Activated CD8-positive, alpha-beta T cell treated with anti-CD3 and anti-CD28 coated beads, Interleukin-2, amount 10 ng/mL, durations not matched to agents 7 days and 5 days (primary cell): ENCODE measurements at regions of chr7 and their contacts with region 1.

Region 1: GRCh38 chr7:26365077-26365900 is 73.6 kb downstream of the SNX10 start:
- DNase-seq: peak; percentile 71
- ATAC-seq: peak; percentile 77
- H3K4me3 Mint-ChIP-seq: no peak overlapping the region
- H3K27ac Mint-ChIP-seq: peak overlapping the region; percentile 48
- H3K4me1 Mint-ChIP-seq: peaks cover 16% of the 10 kb centered on the region
- H3K27me3 Mint-ChIP-seq: no peaks in the 10 kb centered on the region

Region 2: GRCh38 chr7:26078437-26079336 is 286.6 kb before region 1 on chr7:
- CTCF ChIA-PET with region 1: interaction called, 20 read pairs
- POLR2A ChIA-PET with region 1: no interaction called
- DNase-seq: peak; percentile 85
- ATAC-seq: peak; percentile 100
- H3K4me3 Mint-ChIP-seq: peak overlapping the region; percentile 19
- H3K27ac Mint-ChIP-seq: no peak overlapping the region
- H3K4me1 Mint-ChIP-seq: peaks cover 11% of the 10 kb centered on the region
- H3K27me3 Mint-ChIP-seq: peaks cover 44% of the 10 kb centered on the region

Region 3: DNA sequence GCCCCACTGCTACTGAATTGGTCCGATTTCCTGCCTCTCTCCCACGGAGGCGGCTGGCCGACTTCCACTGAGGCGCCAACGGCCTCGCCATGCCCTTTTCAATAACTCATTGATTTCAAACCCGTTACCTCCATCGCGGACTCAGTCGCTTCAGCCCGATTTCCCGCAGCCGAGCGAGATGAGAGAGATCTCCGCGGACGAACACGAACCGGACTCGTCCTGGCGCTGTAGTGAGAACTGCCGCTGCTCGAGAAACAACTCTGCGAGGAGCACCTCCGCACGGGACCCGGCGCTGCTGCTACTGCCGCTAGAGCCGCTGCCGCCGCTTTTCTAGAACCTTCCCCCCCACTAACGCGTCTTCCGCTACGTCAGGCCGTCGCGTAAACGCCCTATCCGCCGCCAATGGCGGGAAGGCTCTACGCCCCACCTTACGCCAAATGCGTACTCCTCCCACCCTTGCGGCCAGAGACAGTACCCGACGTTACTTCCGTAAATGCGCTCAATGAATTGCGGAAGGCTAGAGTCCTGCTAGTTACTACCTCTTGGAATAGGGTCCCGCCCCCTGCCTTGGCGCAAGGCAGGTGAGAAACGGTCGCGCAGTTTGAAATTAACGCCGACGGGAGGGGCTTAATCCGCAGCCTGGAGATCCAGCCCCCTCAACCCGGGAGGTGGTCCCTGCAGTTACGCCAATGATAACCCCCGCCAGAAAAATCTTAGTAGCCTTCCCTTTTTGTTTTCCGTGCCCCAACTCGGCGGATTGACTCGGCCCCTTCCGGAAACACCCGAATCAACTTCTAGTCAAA is 164.6 kb before region 1 on chr7 and contains the start of gene HNRNPA2B1:
- CTCF ChIA-PET with region 1: interaction called, 25 read pairs
- POLR2A ChIA-PET with region 1: interaction called, 6 read pairs
- DNase-seq: peak; percentile 99
- ATAC-seq: peak; percentile 72
- H3K4me3 Mint-ChIP-seq: peak within 1 kb of the TSS; percentile 100
- H3K27ac Mint-ChIP-seq: peak within 1 kb of the TSS; percentile 100
- H3K4me1 Mint-ChIP-seq: peaks cover 35% of the 10 kb centered on the region
- H3K27me3 Mint-ChIP-seq: no peaks in the 10 kb centered on the region
- total RNA-seq, gene HNRNPA2B1: 882 to 899 TPM

Region 4: DNA sequence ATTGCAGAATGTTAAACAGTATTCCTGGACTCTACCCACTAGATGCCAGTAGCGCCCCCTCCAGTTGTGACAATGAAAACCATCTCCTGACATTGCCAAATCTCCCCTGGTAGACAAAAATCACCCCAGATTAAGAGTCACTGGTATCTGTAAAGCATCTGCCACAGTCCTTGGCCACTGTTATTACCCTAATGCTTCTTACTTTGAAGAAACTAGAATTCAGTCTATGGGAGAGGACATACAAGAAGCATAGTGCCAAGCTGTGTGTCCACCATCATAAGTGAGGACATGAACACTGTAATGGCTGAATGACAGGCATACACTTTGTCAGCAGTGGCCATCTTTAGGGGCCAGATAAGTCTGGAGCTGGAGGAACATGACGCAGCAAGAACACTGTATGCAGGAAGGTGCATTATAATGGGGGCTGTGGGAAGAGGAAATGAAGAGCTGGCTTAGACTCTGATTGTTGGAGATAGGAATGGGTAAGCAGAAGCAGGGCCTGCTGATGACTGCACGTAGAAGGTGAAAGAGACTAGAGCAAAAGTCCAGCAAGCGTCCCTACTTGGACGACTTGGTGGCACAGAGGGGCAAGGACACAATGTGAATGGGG is 131.3 kb before region 1 on chr7:
- CTCF ChIA-PET with region 1: no interaction called
- POLR2A ChIA-PET with region 1: no interaction called
- DNase-seq: no peak
- ATAC-seq: no peak
- H3K4me3 Mint-ChIP-seq: no peak overlapping the region
- H3K27ac Mint-ChIP-seq: no peak overlapping the region
- H3K4me1 Mint-ChIP-seq: no peaks in the 10 kb centered on the region
- H3K27me3 Mint-ChIP-seq: peaks cover 9% of the 10 kb centered on the region

Region 5: DNA sequence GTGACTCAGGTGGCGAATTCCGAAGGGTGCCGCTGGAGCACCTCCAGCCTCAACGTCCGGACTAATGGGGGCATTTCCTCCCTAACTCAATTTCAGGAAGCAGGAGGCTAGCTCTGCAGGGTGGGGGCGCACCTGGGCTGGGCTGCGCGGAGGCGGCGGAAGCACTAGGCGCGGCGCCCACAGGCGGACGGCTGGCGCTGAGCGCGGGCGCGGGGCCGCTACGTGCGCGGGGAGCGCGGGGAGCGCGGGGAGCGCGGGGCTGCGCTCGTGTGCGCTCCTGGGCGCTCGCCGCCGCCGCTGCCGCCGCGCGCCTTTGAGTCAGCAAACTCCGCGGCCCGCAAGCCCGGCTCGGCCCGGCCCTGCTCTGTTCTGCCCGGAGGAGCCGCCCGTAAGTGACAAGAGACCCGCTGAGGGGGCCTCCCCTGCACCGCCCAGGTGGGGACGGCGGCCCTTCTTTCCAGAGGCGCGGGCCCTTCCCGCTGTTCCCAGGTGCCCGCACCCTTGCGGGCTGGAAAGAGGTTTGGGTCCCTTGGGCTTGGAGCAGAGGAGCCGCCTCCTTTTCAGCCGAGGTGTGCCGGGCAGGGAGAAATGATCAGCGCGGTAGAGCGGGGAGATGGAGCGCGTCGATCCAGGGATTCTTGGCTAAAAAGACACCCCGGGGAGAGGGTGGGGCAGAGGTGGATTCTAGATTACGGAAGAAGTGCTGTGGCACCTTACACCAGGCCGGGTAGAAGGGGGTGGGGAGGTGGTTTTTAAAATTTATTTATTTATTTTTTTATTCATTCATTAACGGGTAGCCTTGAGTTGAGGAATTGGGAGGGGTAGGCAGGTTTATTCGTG is 73.4 kb before region 1 on chr7 and contains the start of gene SNX10:
- CTCF ChIA-PET with region 1: interaction called, 21 read pairs
- POLR2A ChIA-PET with region 1: no interaction called
- DNase-seq: peak; percentile 82
- ATAC-seq: peak; percentile 80
- H3K4me3 Mint-ChIP-seq: peak within 1 kb of the TSS; percentile 94
- H3K27ac Mint-ChIP-seq: peak within 1 kb of the TSS; percentile 92
- H3K4me1 Mint-ChIP-seq: peaks cover 38% of the 10 kb centered on the region
- H3K27me3 Mint-ChIP-seq: peaks cover 6% of the 10 kb centered on the region
- total RNA-seq, gene SNX10: 39.2 to 42.7 TPM

Region 6: DNA sequence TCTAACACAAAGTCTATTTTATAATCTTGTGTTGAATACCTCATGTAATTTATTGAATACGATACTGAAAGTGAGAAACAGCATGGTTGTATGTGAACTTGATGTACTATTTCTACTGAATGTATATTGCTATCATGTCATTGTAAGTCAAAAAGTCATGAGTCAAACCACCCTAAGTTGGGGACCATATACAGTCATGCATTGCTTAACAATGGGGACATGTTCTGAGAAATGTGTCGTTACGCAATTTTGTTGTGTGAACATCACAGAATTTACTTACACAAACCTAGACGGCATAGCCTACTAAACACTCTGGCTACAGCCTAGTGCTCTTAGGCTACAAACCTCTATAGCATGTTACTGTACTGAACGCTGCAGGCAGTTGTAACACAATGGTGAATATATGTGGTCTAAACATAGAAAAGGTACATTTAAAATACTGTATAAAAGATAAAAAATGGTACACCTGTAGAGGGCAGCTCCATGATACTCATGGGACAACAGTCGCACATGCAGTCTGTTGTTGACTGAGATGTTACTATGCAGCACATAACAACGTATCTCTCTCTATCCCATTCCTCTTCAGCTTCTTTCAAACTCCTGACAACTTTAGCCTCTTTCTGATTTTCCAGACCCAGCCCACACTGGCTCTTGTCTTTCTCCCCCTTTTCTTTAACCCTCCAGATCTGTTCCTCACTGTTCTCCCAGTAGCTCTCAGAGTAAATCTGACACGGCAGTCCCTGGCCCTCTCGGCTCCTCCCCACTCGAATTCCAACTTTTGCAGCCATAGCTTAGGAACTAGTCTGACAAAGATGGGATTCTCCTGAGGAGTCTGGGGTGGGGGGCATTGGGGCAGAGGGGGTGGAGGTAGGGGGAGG is 16.4 kb after region 1 on chr7:
- CTCF ChIA-PET with region 1: interaction called, 12 read pairs
- POLR2A ChIA-PET with region 1: no interaction called
- DNase-seq: no peak
- ATAC-seq: no peak
- H3K4me3 Mint-ChIP-seq: no peak overlapping the region
- H3K27ac Mint-ChIP-seq: no peak overlapping the region
- H3K4me1 Mint-ChIP-seq: peaks cover 6% of the 10 kb centered on the region
- H3K27me3 Mint-ChIP-seq: peaks cover 30% of the 10 kb centered on the region

Region 7: DNA sequence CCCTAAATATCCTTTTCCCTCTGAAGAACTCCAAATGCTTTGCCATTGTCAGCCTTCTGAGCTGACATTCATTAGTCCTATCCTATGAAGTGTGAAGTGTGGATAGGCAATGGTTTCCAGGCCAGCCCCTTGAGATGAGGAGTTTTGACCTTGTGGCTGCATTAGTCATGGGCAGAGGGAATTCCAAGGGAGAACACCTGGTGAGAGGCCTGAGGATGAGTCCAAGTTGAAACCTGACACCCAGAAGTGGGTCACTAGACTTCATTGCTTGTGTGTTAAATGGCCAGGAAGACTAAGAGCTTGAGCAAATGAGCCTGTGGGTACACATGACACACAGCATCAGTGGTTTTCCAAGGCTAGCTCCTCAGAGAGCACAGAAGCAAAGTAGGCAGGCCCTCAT is 238.3 kb after region 1 on chr7:
- CTCF ChIA-PET with region 1: no interaction called
- POLR2A ChIA-PET with region 1: no interaction called
- DNase-seq: no peak
- ATAC-seq: no peak
- H3K4me3 Mint-ChIP-seq: no peak overlapping the region
- H3K27ac Mint-ChIP-seq: no peak overlapping the region
- H3K4me1 Mint-ChIP-seq: no peaks in the 10 kb centered on the region
- H3K27me3 Mint-ChIP-seq: peaks cover 30% of the 10 kb centered on the region

Region 8: DNA sequence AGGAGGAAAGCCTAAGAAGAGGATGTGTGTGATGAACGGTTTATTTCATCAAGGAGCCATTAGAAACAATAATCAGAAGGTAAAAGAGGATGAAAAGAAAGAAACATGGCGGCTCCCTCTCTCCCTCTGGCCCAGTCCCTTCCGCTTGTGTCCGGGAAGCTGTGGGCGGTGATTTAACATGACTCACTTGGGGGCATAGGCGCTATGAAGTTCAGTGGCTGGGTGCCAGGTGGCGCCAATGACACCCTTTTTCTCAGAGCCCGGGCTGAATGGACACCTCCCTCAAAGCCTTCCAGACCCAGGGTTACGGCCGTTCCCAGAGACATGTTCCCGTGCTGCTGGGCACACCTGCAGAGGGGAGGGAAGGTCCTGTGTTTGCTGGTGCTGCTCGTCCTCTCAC is 255.1 kb after region 1 on chr7:
- CTCF ChIA-PET with region 1: no interaction called
- POLR2A ChIA-PET with region 1: no interaction called
- DNase-seq: no peak
- ATAC-seq: no peak
- H3K4me3 Mint-ChIP-seq: no peak overlapping the region
- H3K27ac Mint-ChIP-seq: no peak overlapping the region
- H3K4me1 Mint-ChIP-seq: no peaks in the 10 kb centered on the region
- H3K27me3 Mint-ChIP-seq: no peaks in the 10 kb centered on the region

Region 9: DNA sequence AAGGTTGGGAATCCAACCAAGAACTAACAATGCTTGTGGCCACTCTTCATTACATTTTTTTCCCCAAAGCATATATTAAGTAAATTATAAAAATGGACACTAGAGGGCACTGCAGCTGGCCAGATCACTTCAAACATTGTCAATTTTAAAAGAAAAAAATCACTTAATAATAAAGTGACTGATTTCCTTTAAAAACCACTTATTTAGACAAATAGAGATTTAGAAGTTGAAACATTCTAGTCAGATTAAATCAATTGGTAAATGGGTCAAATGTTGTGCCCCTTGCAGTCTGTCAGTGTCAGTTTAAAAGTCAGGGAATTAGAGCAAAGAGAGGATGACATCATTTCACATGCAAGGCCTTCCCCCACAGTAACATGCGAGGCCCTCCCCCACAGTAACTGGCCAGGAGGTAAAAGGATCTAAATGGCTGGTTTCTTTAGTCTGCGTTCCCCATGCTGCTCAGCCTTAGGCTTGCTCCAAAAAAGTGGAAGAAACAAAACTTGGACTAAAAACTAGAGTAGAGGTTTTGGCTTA is 321.2 kb after region 1 on chr7:
- CTCF ChIA-PET with region 1: interaction called, 10 read pairs
- POLR2A ChIA-PET with region 1: no interaction called
- DNase-seq: no peak
- ATAC-seq: peak; percentile 33
- H3K4me3 Mint-ChIP-seq: no peak overlapping the region
- H3K27ac Mint-ChIP-seq: no peak overlapping the region
- H3K4me1 Mint-ChIP-seq: peaks cover 2% of the 10 kb centered on the region
- H3K27me3 Mint-ChIP-seq: peaks cover 25% of the 10 kb centered on the region